SK-N-SH (cell line): ENCODE measurements at regions of chr11 and their contacts with region 1.

Region 1: DNA sequence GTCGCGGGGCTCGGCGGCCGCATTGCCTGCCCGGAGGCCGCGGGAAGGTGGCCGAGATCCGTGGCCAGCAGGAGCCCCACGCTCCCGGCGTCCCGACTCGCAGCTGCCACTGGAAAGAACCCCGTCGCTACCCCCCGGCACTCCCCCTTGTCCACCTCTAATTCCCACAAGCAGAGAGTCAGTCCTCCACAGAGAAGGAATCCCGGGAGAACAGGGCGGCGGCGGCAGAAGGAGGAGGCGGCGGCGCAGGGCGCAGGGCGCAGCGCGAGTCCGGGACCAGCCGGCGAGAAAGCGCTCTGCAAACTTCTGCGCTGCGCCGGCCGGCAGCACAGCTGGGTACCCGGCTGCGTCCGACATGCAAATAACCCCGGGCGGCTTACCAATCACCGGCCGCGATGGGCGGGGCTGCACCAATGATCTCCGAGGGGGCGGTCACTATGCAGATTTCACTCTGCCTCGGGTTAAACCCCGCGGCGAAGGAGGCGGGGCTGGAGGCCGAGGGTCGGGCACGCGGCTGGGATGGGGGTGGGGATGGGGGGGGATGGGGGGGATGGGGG is at the start of gene ABTB2:
- DNase-seq: peak; percentile 98
- H3K4me3 ChIP-seq: peak within 1 kb of the TSS; percentile 72 to 76
- H3K27ac ChIP-seq: peak within 1 kb of the TSS; percentile 35 to 63; a peak in 3 of 4 replicates
- H3K4me1 ChIP-seq: peaks cover 18 to 33% of the 10 kb centered on the region in 2 experiments; a peak in 3 of 4 replicates
- H3K27me3 ChIP-seq: no peaks in the 10 kb centered on the region
- CTCF ChIP-seq: no peak
- EP300 ChIP-seq: no peak
- RAD21 ChIP-seq: 0 out of 2 replicates have a peak, but pooled peaks have one; percentile 15
- polyA plus RNA-seq, gene ABTB2: 4.9 and 7.8 TPM in 2 replicates

Region 2: DNA sequence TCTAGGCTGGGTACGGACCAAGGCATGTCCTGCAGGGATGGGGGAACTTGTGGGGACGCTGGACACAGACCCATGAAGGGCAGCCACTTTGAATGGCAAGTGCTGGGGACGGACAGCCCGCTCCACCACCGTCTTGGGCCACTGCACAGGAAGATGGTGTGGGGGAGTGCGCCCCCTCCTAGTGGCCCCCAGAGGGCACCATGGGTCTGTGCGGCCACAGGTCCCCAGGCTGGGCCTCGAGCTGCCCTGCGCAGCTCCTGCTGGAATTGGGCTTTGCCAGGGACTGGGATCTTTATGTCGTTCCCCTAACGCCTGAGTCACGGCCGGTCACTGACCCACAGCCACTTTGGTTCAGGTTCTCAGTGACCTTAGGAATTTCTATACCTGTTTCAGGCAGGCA is 208.0 kb before region 1 on chr11:
- CTCF ChIA-PET with region 1: interaction called, 36 read pairs
- POLR2A ChIA-PET with region 1: interaction called, 13 read pairs
- DNase-seq: peak; percentile 79
- H3K4me3 ChIP-seq: no peak overlapping the region
- H3K27ac ChIP-seq: no peak overlapping the region
- H3K4me1 ChIP-seq: peaks cover 0 to 28% of the 10 kb centered on the region in 2 experiments; a peak in 3 of 4 replicates
- H3K27me3 ChIP-seq: no peaks in the 10 kb centered on the region
- CTCF ChIP-seq: peak; percentile 55
- EP300 ChIP-seq: no peak
- RAD21 ChIP-seq: peak; percentile 73

Region 3: GRCh38 chr11:34161812-34162499 is 195.8 kb before region 1 on chr11:
- CTCF ChIA-PET with region 1: interaction called, 16 read pairs
- POLR2A ChIA-PET with region 1: interaction called, 3 read pairs
- DNase-seq: no peak
- H3K4me3 ChIP-seq: no peak overlapping the region
- H3K27ac ChIP-seq: peak overlapping the region in 1 of 2 experiments; percentile 34; a peak in 1 of 4 replicates
- H3K4me1 ChIP-seq: peaks cover 0 to 60% of the 10 kb centered on the region in 2 experiments; a peak in 1 of 4 replicates
- H3K27me3 ChIP-seq: no peaks in the 10 kb centered on the region
- CTCF ChIP-seq: no peak
- EP300 ChIP-seq: no peak
- RAD21 ChIP-seq: no peak

Region 4: GRCh38 chr11:34185926-34186841 is 171.6 kb before region 1 on chr11:
- CTCF ChIA-PET with region 1: interaction called, 240 read pairs
- POLR2A ChIA-PET with region 1: no interaction called
- DNase-seq: no peak
- H3K4me3 ChIP-seq: no peak overlapping the region
- H3K27ac ChIP-seq: no peak overlapping the region
- H3K4me1 ChIP-seq: peaks cover 9 to 23% of the 10 kb centered on the region in 2 experiments; a peak in 2 of 4 replicates
- H3K27me3 ChIP-seq: no peaks in the 10 kb centered on the region
- CTCF ChIP-seq: no peak
- EP300 ChIP-seq: no peak
- RAD21 ChIP-seq: no peak

Region 5: DNA sequence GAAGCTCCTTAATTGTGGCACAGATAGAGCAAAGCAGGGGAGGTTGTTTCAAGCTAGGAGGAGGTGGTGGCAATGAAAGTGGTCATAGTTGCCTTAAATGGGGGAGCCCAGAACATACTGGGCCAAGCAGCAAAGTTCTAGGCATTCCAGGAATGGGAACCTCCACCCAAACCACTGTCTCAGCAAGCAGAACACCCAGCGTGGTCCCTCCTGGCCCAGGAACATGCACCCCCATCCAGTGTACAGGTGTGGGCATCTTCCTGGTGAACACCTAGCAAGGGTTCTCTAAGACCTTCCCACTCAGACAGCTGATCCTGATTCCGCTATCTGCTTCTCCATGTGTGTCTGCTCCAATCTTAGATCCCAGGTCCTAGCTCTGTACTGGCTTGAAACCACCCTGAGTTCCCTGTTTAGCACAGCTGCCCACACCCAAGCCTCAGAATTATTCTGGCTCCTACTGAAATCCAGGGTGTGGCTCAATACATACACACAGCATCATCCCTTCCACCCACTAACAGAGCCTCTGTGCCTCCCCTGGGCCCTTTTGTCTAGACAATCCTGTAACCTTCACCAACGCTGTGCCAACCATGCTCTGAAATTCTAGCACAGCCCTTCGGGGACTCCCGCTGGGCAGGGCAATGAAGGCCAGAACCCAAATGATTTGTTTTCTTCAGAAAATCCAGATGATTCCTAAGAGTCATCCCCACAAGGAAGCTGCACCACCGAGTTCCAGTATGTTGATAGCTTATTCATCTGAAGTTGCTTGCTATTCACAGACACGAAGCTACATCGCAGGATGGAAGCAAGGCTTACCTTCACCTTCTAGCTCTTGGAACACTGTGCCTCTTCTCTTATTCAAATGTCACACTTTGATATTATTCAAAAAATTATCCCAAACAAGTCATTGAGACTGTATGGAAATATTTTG is 76.6 kb before region 1 on chr11:
- CTCF ChIA-PET with region 1: interaction called, 13 read pairs
- POLR2A ChIA-PET with region 1: interaction called, 6 read pairs
- DNase-seq: no peak
- H3K4me3 ChIP-seq: no peak overlapping the region
- H3K27ac ChIP-seq: 0 out of 4 replicates have a peak overlapping the region, but pooled peaks of 1 of the 2 experiments have one; percentile 23
- H3K4me1 ChIP-seq: peaks cover under 1 to 54% of the 10 kb centered on the region in 2 experiments; a peak in 3 of 4 replicates
- H3K27me3 ChIP-seq: no peaks in the 10 kb centered on the region
- CTCF ChIP-seq: no peak
- EP300 ChIP-seq: no peak
- RAD21 ChIP-seq: 0 out of 2 replicates have a peak, but pooled peaks have one; percentile 6

Region 6: DNA sequence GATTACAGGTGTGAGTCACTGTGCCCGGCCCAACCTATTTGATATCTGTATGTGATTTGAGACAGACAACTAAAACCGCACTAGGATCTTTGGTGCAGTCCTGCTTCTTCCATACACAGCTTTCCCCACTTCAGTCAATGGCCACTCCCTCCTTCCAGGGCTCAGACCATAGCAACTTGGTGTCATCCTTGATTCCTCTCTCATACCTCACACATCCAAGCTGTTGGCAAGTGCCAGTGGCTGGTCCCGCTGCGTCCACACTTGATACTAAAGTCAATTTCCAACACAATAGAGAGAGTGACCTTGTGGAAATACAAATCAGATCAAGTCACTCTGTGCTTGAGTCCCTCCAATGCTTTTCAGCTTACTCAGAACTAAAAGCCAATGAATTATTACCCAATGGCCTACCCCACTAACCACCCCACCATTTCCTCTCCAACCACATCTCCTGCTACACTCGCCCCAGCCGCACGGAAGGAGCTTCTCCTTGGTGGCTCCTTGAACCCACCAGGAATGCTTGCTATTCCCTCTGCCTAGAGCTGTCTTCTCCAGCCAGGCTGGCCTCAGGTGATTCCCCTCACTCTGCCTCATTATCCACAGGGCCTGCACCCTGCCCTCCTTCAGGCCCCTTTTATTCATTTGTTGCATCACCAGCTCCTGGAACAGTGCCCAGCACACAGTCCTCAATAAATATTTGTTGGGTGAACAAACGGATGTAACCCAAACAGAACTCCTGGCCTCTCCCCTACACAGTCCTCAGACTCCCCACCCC is 12.8 kb before region 1 on chr11:
- CTCF ChIA-PET with region 1: interaction called, 15 read pairs
- POLR2A ChIA-PET with region 1: interaction called, 5 read pairs
- DNase-seq: no peak
- H3K4me3 ChIP-seq: no peak overlapping the region
- H3K27ac ChIP-seq: peak overlapping the region; percentile 26 to 56
- H3K4me1 ChIP-seq: peaks cover 51 to 55% of the 10 kb centered on the region in 2 experiments
- H3K27me3 ChIP-seq: no peaks in the 10 kb centered on the region
- CTCF ChIP-seq: no peak
- EP300 ChIP-seq: peak in 1 of 2 experiments; percentile 58; a peak in 2 of 4 replicates
- RAD21 ChIP-seq: no peak